GM12878 (cell line): ENCODE measurements at regions of chr1 and their contacts with region 1.

Region 1: DNA sequence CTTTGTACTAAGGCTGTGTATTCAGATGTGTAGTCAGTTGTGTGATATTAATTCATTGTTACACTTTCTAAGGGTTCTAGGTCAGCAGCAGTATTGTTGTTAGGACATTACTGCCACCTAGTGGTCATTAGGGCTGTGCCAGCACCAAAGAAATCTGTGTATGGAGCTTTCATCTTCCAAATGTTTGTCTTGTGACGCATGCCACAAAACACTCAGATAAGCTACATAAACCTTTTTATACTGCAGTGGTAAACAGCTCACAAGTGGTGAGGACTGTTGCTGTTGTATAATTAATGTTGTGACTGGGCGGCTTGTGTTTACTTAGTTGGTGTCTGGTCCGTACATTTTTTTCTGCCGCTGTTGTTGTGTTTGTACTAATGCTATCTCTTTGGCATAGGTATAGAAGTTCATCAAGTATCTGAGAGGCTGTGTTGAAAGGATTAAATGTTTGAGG is 51.7 kb downstream of the S1PR1 start:
- DNase-seq: peak; percentile 69
- ATAC-seq: peak; percentile 71
- H3K4me3 ChIP-seq: no peak overlapping the region
- H3K27ac ChIP-seq: no peak overlapping the region
- H3K4me1 ChIP-seq: peaks cover 35% of the 10 kb centered on the region
- H3K27me3 ChIP-seq: no peaks in the 10 kb centered on the region
- CTCF ChIP-seq: peak; percentile 79 to 92 (median 90)
- EP300 ChIP-seq: no peak
- POLR2A ChIP-seq: no peak
- RAD21 ChIP-seq: peak; percentile 96

Region 2: GRCh38 chr1:100866041-100866900 is 422.2 kb before region 1 on chr1:
- CTCF ChIA-PET with region 1: interaction called, 17 read pairs
- POLR2A ChIA-PET with region 1: no interaction called
- RAD21 ChIA-PET with region 1: interaction called, 7 read pairs
- SMC1A ChIA-PET with region 1: interaction called, 7 read pairs
- in situ Hi-C with region 1: no loop called
- intact Hi-C with region 1: no loop called
- DNase-seq: no peak
- ATAC-seq: peak; percentile 87
- H3K4me3 ChIP-seq: no peak overlapping the region
- H3K27ac ChIP-seq: no peak overlapping the region
- H3K4me1 ChIP-seq: peaks cover 9% of the 10 kb centered on the region; the same call in 1 of the 2 replicates
- H3K27me3 ChIP-seq: no peaks in the 10 kb centered on the region
- CTCF ChIP-seq: peak; percentile 35 to 64 (median 53); a peak in 5 of 6 replicates
- EP300 ChIP-seq: no peak
- POLR2A ChIP-seq: no peak
- RAD21 ChIP-seq: peak; percentile 68

Region 3: DNA sequence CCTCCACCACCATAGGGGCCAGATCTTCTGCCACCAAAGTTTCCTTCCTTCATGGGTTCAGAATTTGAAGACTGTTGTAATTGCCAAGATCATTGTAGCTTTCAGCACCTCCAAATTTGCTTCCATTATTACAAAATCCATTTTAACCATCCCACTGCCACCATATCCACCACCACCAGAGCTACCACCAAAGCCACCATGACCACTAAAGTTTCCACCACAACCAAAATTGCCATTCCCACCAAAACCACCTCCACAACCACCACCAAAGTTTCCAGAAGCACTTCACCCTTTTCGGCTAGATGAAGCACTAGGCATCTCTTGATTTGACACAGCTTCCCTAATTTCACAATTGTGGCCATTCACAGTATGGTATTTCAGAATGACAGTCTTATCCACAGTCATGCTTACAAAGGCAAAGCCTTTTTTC is 347.4 kb before region 1 on chr1:
- CTCF ChIA-PET with region 1: interaction called, 11 read pairs
- POLR2A ChIA-PET with region 1: no interaction called
- RAD21 ChIA-PET with region 1: interaction called, 5 read pairs
- SMC1A ChIA-PET with region 1: interaction called, 3 read pairs
- in situ Hi-C with region 1: no loop called
- intact Hi-C with region 1: no loop called
- DNase-seq: peak; percentile 8
- ATAC-seq: peak; percentile 60
- H3K4me3 ChIP-seq: no peak overlapping the region
- H3K27ac ChIP-seq: no peak overlapping the region
- H3K4me1 ChIP-seq: no peaks in the 10 kb centered on the region
- H3K27me3 ChIP-seq: no peaks in the 10 kb centered on the region
- CTCF ChIP-seq: no peak
- EP300 ChIP-seq: no peak; a peak in 1 of 4 replicates
- POLR2A ChIP-seq: no peak
- RAD21 ChIP-seq: no peak

Region 4: GRCh38 chr1:101178688-101179491 is 109.6 kb before region 1 on chr1:
- CTCF ChIA-PET with region 1: interaction called, 8 read pairs
- POLR2A ChIA-PET with region 1: interaction called, 3 read pairs
- RAD21 ChIA-PET with region 1: interaction called, 3 read pairs
- SMC1A ChIA-PET with region 1: interaction called, 8 read pairs
- in situ Hi-C with region 1: no loop called
- intact Hi-C with region 1: loop called (anchors 2 kb)
- DNase-seq: peak; percentile 80
- ATAC-seq: peak; percentile 88
- H3K4me3 ChIP-seq: peak overlapping the region; percentile 32; the same call in 1 of the 2 replicates
- H3K27ac ChIP-seq: peak overlapping the region; percentile 94
- H3K4me1 ChIP-seq: peaks cover 16% of the 10 kb centered on the region
- H3K27me3 ChIP-seq: no peaks in the 10 kb centered on the region
- CTCF ChIP-seq: no peak
- EP300 ChIP-seq: peak; percentile 90 to 95
- POLR2A ChIP-seq: no peak
- RAD21 ChIP-seq: peak; percentile 15; the same call in 1 of the 2 replicates

Region 5: GRCh38 chr1:101298663-101299062 is 10.1 kb after region 1 on chr1:
- CTCF ChIA-PET with region 1: interaction called, 166 read pairs
- POLR2A ChIA-PET with region 1: interaction called, 4 read pairs
- RAD21 ChIA-PET with region 1: interaction called, 171 read pairs
- SMC1A ChIA-PET with region 1: interaction called, 275 read pairs
- in situ Hi-C with region 1: no loop called
- intact Hi-C with region 1: no loop called
- DNase-seq: no peak
- ATAC-seq: no peak
- H3K4me3 ChIP-seq: no peak overlapping the region
- H3K27ac ChIP-seq: no peak overlapping the region
- H3K4me1 ChIP-seq: peaks cover 2% of the 10 kb centered on the region; the same call in 1 of the 2 replicates
- H3K27me3 ChIP-seq: no peaks in the 10 kb centered on the region
- CTCF ChIP-seq: no peak
- EP300 ChIP-seq: no peak
- POLR2A ChIP-seq: no peak
- RAD21 ChIP-seq: no peak

Region 6: DNA sequence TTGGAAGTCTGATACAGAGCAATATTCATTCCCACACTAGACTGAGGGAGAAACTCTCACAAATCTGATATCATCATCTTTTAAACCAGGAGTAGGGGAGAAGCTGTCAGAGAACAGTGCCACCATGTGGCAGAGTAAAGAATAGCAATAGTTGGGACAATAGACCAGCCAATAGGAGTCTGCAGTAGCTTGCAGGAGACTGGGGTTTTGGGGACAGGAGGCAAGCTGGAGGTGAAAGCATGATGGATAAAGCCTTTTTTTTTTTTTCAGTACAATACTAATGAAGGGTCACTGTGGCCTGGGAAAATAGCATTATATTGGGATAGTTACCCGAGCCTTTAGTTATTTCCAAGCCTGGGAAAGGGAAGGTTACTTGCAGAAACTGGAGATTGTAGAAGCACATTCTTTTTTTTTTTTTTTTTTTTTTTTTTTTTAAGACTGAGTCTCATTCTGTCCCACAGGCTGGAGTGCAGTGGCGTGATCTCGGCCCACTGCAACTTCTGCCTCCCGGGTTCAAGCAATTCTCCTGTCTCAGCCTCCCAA is 69.0 kb after region 1 on chr1:
- CTCF ChIA-PET with region 1: interaction called, 42 read pairs
- POLR2A ChIA-PET with region 1: interaction called, 12 read pairs
- RAD21 ChIA-PET with region 1: interaction called, 83 read pairs
- SMC1A ChIA-PET with region 1: interaction called, 68 read pairs
- in situ Hi-C with region 1: no loop called
- intact Hi-C with region 1: loop called (anchors 1 kb)
- DNase-seq: peak; percentile 95
- ATAC-seq: peak; percentile 99
- H3K4me3 ChIP-seq: no peak overlapping the region
- H3K27ac ChIP-seq: peak overlapping the region; percentile 75
- H3K4me1 ChIP-seq: peaks cover 7% of the 10 kb centered on the region; the same call in 1 of the 2 replicates
- H3K27me3 ChIP-seq: no peaks in the 10 kb centered on the region
- CTCF ChIP-seq: peak; percentile 79 to 92 (median 89)
- EP300 ChIP-seq: no peak
- POLR2A ChIP-seq: no peak
- RAD21 ChIP-seq: peak; percentile 93

Region 7: GRCh38 chr1:101451888-101452287 is 163.4 kb after region 1 on chr1:
- CTCF ChIA-PET with region 1: interaction called, 5 read pairs
- POLR2A ChIA-PET with region 1: no interaction called
- RAD21 ChIA-PET with region 1: interaction called, 4 read pairs
- SMC1A ChIA-PET with region 1: interaction called, 11 read pairs
- in situ Hi-C with region 1: no loop called
- intact Hi-C with region 1: no loop called
- DNase-seq: no peak
- ATAC-seq: peak; percentile 78
- H3K4me3 ChIP-seq: no peak overlapping the region
- H3K27ac ChIP-seq: peak overlapping the region; percentile 77
- H3K4me1 ChIP-seq: peaks cover 44% of the 10 kb centered on the region
- H3K27me3 ChIP-seq: no peaks in the 10 kb centered on the region
- CTCF ChIP-seq: no peak
- EP300 ChIP-seq: no peak
- POLR2A ChIP-seq: no peak
- RAD21 ChIP-seq: no peak

Region 8: DNA sequence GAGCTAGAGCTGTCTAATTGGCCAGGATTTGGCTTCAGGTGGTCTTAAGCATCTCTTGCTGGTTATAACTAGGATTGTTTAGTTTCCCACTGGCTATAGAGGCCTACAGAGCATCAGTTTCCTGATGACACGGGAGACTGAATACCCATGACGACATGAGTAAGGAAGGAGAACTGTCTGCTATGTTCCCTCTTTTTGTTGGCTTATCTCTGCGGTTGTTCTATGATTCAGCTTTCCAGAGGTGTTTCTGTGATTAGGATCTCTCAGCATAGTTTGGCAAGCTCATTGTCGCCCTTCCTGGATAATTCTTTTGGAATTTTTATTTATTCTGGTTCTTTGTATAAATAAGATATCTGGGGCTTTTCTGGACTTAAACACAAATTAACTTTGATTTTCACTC is 544.8 kb after region 1 on chr1:
- CTCF ChIA-PET with region 1: no interaction called
- POLR2A ChIA-PET with region 1: no interaction called
- RAD21 ChIA-PET with region 1: no interaction called
- SMC1A ChIA-PET with region 1: no interaction called
- in situ Hi-C with region 1: no loop called
- intact Hi-C with region 1: no loop called
- DNase-seq: no peak
- ATAC-seq: no peak
- H3K4me3 ChIP-seq: no peak overlapping the region
- H3K27ac ChIP-seq: no peak overlapping the region
- H3K4me1 ChIP-seq: no peaks in the 10 kb centered on the region
- H3K27me3 ChIP-seq: no peaks in the 10 kb centered on the region
- CTCF ChIP-seq: no peak
- EP300 ChIP-seq: no peak
- POLR2A ChIP-seq: no peak
- RAD21 ChIP-seq: no peak